HEK293T (cell line): ENCODE measurements at regions of chr5 and their contacts with region 1.

Region 1: DNA sequence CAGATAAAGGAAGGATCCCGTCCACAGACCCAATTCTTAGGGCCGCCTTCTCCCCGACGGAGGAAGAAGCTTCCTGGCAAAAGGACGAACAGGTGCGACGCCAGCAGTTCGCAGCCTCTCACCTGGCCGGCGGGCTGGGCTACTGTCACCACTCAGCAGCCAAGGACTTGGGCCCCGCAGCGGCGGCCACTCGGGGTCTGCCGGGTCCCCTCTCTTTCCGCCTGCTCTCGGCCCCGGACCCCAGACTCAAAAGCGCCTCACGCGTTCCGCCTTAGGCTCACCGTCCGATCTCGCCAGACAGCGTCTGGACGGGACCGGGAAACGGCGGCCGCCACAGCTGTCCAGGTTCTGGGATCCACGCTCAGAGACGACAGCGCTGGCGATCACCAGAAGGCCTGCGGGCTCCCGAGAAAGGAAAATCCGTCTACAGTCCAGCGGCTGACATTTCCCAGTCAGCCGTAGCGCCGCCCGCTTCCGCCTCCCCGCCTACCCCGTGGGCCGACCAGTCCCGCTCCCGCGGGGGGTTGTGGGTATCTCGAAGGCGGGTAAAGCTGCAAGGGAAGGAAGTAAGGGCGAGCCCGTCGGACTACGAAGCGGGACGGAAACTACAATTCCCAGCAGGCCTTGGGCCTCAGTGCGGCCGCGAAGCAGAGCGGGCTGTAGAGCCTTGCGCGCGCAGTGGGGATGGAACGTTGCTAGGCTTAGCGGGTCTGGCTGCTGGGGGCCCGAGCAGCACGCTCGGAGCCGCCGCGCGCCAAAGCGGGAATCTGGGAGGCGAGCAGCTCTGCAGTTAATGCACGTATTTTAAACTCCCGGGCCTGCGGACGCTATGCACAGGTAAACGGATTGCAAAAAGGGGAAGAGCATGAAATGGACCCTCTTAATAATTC is at the starts of genes LMBRD2 and SKP2:
- DNase-seq: peak; percentile 93

Region 2: DNA sequence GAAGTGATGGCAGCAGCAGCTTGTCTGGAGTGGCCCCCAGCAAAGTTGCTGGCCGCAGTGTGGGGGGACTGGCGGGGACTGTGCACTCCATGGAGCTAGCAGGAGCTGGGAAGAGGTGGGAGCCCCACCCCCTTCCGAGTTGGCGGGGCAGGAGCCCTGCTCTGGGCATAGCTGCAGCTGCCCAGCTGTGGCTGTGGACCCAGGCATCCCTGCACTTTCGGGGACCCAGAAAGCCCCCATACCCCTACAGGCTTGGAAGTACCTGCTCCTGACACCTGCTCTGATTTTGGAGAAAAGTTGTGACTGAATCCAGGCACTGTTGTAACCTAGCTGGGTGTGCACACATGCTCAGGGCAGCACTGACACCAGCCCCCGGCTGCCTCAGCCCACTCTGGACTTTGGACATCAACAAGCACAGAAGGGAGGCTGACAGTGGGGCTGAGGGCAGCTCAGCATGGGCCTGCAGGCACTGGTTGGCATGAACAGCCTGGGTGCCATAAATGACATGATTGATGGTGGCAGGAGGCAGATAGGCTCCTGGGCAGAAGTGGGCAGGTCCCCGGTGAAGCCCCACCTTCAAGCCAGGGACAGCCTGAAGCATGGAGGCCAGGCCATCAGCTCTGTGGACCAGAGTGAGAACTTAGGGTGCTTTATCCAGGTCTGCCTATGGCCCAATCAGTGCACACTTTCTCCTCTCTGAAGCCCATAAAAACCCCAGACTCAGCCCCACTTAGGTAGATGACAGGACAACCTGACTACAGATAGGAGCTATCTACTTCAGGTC is 12.6 kb before region 1 on chr5:
- CTCF ChIA-PET with region 1: interaction called, 3 read pairs
- POLR2A ChIA-PET with region 1: interaction called, 18 read pairs
- DNase-seq: no peak

Region 3: DNA sequence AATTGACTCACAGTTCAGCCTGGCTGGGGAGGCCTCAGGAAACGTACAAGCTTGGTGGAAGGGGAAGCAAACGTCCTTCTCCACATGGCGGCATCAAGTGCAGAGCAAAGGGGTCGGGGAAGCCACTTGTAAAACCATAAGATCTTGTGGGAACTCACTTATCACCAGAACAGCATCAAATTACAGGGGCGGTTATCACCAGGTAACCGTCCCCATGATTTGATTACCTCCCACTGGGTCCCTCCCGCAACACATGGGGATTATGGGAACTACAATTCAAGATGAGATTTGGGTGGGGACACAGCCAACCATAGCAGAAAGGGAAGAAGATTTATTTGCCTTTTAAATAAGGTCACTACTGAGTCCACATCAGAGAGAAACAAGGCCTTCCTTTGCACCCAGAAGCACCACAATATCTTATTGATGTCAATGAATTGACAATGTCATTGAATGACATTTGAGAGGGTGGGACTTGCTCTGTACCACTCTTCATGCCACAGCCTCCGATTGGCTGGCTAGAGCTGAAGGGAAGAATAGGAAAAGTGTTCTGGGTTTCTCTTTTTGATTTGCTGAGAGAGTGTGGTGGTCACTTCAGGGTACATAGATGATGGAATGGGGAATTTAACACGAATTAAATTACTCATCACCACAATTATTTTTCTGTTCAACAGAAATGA is 11.3 kb after region 1 on chr5:
- CTCF ChIA-PET with region 1: interaction called, 7 read pairs
- POLR2A ChIA-PET with region 1: interaction called, 13 read pairs
- DNase-seq: no peak

Region 4: GRCh38 chr5:36168737-36169136 is 17.1 kb after region 1 on chr5:
- CTCF ChIA-PET with region 1: interaction called, 7 read pairs
- POLR2A ChIA-PET with region 1: interaction called, 13 read pairs
- DNase-seq: no peak

Region 5: GRCh38 chr5:36177715-36178523 is 26.2 kb after region 1 on chr5:
- CTCF ChIA-PET with region 1: interaction called, 11 read pairs
- POLR2A ChIA-PET with region 1: no interaction called
- DNase-seq: peak; percentile 30